Right cardiac atrium (tissue), 5 donors: ENCODE measurements at regions of chr19 and their contacts with region 1.

Region 1: DNA sequence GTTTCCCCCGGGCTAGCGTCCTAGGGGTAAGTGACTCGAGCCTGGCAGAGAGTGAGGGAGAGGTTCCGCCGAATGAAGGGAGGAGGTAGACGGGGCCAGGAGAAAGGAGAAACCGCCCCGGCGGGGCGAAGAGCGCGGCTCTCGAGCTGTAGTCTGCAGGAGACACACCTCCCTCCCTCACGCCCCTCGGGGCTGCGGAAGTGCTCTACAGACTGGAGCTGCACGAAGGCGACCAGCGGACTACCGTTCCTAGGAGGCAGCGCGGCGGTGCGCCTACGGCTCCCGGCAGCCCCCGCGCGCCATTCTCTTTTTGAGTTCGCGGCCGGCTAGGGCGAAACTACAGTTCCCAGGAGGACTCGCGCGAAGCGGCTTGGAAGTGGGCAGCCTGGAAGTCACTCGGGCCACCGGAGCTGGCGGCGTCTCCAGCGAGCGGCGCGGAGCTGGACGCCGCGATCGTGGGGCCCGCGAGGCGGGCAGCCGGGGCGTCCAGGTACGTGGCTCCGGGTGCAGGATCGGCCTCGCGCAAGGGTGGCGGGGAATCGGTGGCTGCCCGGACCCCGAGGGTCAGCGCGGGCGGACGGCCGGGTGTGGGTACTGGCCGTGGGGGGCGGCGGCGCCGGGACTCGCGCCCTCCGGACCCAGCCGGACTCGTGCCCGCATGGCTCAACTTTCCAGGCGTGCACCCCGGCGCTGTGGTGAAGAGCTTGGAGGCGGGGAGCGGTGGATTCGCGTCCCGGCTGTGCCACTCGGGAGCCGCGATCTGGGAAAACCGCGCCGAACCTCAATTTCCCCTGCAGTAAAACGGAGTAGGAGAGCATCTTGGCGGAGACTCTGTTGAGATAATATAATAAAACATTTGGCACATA is at the start of gene SIPA1L3:
- DNase-seq: peak; percentile 95 to 98 (median 97)
- ATAC-seq: peak; percentile 99
- H3K4me3 ChIP-seq: peak within 1 kb of the TSS; percentile 88
- H3K27ac ChIP-seq: peak within 1 kb of the TSS; percentile 39
- H3K4me1 ChIP-seq: peaks cover 6% of the 10 kb centered on the region
- H3K27me3 ChIP-seq: no peaks in the 10 kb centered on the region
- total RNA-seq, gene SIPA1L3: 7.5 to 19.8 (median 12.4) TPM

Region 2: GRCh38 chr19:37779127-37780005 is 127.7 kb before region 1 on chr19 and contains the start of gene ZNF573:
- intact Hi-C with region 1: no loop called
- DNase-seq: peak; percentile 84 to 93 (median 90)
- ATAC-seq: peak; percentile 98 to 99
- H3K4me3 ChIP-seq: peak within 1 kb of the TSS; percentile 97
- H3K27ac ChIP-seq: peak within 1 kb of the TSS; percentile 100
- H3K4me1 ChIP-seq: no peaks in the 10 kb centered on the region
- H3K27me3 ChIP-seq: no peaks in the 10 kb centered on the region
- total RNA-seq, gene ZNF573: 9.9 to 15.5 (median 12.1) TPM

Region 3: DNA sequence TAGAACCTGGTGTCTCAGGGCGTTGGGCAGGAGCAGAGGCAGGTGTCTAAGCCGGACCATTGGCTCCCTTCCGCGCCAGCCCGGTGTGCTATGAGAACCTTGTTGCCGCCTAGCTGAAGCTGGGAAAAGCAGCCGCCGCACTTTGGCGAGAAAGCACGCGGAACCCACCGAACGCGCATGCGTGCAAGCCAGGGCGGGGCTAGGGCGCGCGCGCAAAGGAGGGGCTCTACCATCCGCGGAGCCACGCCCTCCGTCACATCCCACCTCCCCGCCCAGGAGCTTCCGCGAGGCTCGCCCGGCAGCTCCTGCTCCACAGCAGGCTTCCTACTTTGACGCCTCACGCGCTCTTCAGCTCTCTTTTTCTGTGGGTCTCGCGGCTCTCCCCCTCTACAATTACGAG is 52.0 kb before region 1 on chr19:
- intact Hi-C with region 1: no loop called
- DNase-seq: peak; percentile 26 to 75 (median 68)
- ATAC-seq: peak; percentile 63 to 78
- H3K4me3 ChIP-seq: no peak overlapping the region
- H3K27ac ChIP-seq: no peak overlapping the region
- H3K4me1 ChIP-seq: no peaks in the 10 kb centered on the region
- H3K27me3 ChIP-seq: no peaks in the 10 kb centered on the region

Region 4: DNA sequence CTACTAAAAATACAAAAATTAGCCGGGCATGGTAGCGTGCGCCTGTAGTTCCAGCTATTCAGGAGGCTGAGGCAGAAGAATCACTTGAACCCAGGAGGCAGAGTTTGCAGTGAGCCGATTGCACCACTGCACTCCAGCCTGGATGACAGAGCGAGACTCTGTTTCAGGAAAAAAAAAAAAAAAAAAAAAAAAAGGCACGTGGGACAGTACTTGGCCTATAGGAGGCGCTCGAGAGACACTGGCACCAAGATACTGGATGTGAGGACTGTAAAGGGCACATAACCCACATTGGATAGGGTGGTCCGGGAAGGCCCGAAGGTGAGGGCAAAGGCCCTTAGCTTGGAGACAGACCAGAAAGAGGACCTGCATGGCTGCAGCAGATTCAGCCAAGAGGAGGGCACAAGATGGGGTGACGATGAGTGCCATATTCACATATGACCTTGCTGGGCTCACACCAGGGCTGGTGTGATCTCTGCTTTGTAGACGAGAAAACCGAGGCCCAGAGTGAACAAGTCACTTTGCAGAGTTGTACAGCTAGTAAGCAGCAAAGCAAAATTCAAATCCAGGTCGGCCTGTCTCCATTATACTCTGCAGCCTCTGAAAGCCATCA is 227.5 kb after region 1 on chr19:
- intact Hi-C with region 1: loop called in 1 of 4 experiments (anchors 10 kb)
- DNase-seq: no peak
- ATAC-seq: no peak
- H3K4me3 ChIP-seq: no peak overlapping the region
- H3K27ac ChIP-seq: no peak overlapping the region
- H3K4me1 ChIP-seq: no peaks in the 10 kb centered on the region
- H3K27me3 ChIP-seq: no peaks in the 10 kb centered on the region

Region 5: DNA sequence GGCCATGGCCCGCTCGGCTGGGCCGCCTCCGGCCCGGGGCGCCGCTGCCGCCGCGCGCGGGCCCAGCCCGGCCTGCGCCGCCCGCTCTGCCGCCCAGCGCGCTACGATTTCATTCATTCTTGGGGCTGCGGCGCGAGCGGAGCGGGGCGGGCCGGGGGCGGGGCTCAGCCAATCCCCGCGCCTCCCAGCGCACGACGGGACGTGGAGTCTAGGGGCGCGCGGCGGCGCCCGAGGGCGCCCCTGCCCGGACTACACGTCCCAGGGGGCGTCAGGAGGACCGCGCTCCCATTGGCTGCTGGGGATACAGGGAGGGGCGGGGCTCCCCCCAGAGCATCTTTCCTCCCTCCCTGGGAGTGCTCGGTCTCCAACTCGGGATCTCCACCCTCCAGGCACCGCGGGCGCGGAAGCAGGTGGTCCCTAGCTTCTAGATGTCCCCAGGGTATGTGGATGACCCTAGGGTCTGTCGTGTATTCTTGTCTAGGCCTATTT is 322.5 kb after region 1 on chr19:
- intact Hi-C with region 1: loop called in 1 of 4 experiments (anchors 5 kb)
- DNase-seq: peak; percentile 67 to 86 (median 81)
- ATAC-seq: peak; percentile 81 to 84
- H3K4me3 ChIP-seq: peak overlapping the region; percentile 27
- H3K27ac ChIP-seq: no peak overlapping the region
- H3K4me1 ChIP-seq: no peaks in the 10 kb centered on the region
- H3K27me3 ChIP-seq: no peaks in the 10 kb centered on the region

Region 6: DNA sequence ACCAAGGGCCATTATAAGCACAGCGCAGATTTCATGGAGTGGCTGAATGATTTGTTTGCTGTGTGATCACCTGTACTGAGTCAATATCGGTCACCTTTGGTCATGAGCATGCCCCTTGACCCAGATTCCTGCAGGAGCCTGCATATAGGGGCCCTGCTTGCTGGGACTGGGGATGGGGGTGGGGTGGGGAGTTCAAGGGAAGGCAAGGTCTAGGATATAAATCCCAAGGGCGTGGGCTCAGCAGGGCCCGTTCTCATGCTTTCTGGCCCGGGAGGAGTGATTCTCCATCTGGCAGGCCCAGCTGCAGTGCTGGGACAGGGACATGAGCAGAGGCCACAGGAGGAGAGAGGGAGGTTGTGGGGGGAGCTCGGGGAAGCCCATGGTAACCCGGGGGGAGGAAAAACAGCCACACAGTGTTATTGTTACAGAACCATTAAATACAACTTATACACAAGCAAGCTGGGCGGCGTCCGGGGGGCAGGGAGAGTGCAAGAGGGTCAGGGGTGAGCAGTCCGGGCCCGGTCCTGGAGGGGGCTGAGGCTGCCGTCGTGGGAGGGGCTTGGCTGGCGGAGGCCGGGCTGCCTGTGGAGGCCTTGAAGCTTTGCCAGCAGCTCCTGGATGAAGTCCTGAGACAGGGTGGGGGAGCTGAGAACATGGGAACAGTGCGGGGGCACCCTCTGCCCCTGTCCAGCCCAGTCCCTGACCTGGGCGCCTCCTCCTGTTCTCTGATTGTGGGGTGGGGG is 343.9 kb after region 1 on chr19:
- intact Hi-C with region 1: loop called in 1 of 4 experiments (anchors 10 kb)
- DNase-seq: peak; percentile 88 to 94 (median 94)
- ATAC-seq: peak; percentile 71 to 75
- H3K4me3 ChIP-seq: peak overlapping the region; percentile 20
- H3K27ac ChIP-seq: peak overlapping the region; percentile 96
- H3K4me1 ChIP-seq: peaks cover 4% of the 10 kb centered on the region
- H3K27me3 ChIP-seq: no peaks in the 10 kb centered on the region